ENCODE measurements at regions of chr13 and their contacts with region 1.

Region 1: GRCh38 chr13:109517517-109517916 is 268.9 kb downstream of the IRS2 start:
- DNase-seq: no peak
- H3K4me3 ChIP-seq: no peak overlapping the region
- H3K27ac ChIP-seq: no peak overlapping the region
- H3K4me1 ChIP-seq: no peaks in the 10 kb centered on the region
- H3K27me3 ChIP-seq: no peaks in the 10 kb centered on the region
- CTCF ChIP-seq: no peak
- EP300 ChIP-seq: no peak
- POLR2A ChIP-seq: no peak

Region 2: GRCh38 chr13:109465156-109465555 is 52.4 kb before region 1 on chr13:
- in situ Hi-C with region 1: no loop called
- intact Hi-C with region 1: loop called (anchors 5 kb)
- DNase-seq: no peak
- H3K4me3 ChIP-seq: no peak overlapping the region
- H3K27ac ChIP-seq: no peak overlapping the region
- H3K4me1 ChIP-seq: no peaks in the 10 kb centered on the region
- H3K27me3 ChIP-seq: no peaks in the 10 kb centered on the region
- CTCF ChIP-seq: no peak
- EP300 ChIP-seq: no peak
- POLR2A ChIP-seq: no peak

Region 3: GRCh38 chr13:109479991-109480691 is 37.4 kb before region 1 on chr13:
- in situ Hi-C with region 1: no loop called
- intact Hi-C with region 1: loop called (anchors 1 kb)
- DNase-seq: no peak
- H3K4me3 ChIP-seq: no peak overlapping the region
- H3K27ac ChIP-seq: no peak overlapping the region
- H3K4me1 ChIP-seq: no peaks in the 10 kb centered on the region
- H3K27me3 ChIP-seq: no peaks in the 10 kb centered on the region
- CTCF ChIP-seq: no peak
- EP300 ChIP-seq: no peak
- POLR2A ChIP-seq: no peak